Caco-2 (cell line): ENCODE measurements at regions of chr13 and their contacts with region 1.

Region 1: DNA sequence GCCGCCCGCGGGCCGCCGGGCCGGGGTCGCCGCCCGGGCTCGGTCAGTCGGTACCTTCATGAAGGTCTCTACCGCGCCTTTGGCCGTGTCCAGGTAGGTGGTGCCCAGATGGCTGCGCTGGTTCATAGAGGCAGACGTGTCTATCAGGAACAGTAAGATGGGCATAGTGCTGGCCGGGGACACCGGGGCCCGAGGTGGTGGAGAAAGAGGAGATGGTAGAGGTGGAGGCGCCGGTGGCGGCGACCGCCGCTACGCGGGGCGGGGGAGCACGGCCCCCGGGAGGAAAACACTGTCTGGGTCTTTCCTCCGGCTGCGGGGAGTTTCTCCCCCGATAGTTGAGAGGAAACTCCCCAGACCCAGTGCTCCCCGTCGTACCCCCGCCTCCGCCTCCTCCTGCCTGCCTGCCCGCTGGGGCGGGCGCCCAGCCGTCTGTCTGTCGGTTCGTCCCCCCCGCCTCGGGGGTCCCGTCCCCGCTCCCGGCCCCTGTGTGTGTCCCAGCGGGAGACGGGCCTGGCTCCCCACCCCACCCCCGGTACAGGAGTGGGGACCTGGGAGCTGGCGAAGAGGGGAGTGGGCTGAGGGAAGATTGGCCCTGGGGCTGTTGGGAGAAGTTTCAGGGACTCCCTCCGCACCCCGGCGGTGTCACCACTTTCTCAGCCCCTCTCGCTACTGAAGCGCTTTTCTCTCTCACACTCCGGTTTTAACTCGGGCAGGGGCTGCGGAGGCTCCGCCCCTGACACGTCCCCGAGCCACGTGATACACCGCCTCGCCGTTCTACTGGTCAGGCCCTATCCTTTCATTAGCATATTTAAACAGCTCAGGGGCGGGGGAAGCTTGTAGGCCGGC is at the start of gene INTS6:
- DNase-seq: peak; percentile 100
- H3K4me3 ChIP-seq: peak within 1 kb of the TSS; percentile 72
- H3K4me3 Mint-ChIP-seq: peak within 1 kb of the TSS; percentile 72
- H3K27ac Mint-ChIP-seq: peak within 1 kb of the TSS; percentile 82
- H3K4me1 ChIP-seq: peaks cover 12% of the 10 kb centered on the region; the same call in 1 of the 2 replicates
- H3K4me1 Mint-ChIP-seq: no peaks in the 10 kb centered on the region
- H3K27me3 ChIP-seq: no peaks in the 10 kb centered on the region
- H3K27me3 Mint-ChIP-seq: no peaks in the 10 kb centered on the region
- CTCF ChIP-seq: no peak
- total RNA-seq, gene INTS6: 42.6 and 46.7 TPM in 2 replicates

Region 2: GRCh38 chr13:51435002-51435578 is 17.5 kb before region 1 on chr13:
- CTCF ChIA-PET with region 1: interaction called, 4 read pairs
- POLR2A ChIA-PET with region 1: interaction called, 11 read pairs
- intact Hi-C with region 1: no loop called
- DNase-seq: no peak
- H3K4me3 ChIP-seq: no peak overlapping the region
- H3K4me3 Mint-ChIP-seq: no peak overlapping the region
- H3K27ac Mint-ChIP-seq: no peak overlapping the region
- H3K4me1 ChIP-seq: peaks cover 3% of the 10 kb centered on the region; the same call in 1 of the 2 replicates
- H3K4me1 Mint-ChIP-seq: no peaks in the 10 kb centered on the region
- H3K27me3 ChIP-seq: no peaks in the 10 kb centered on the region
- H3K27me3 Mint-ChIP-seq: no peaks in the 10 kb centered on the region
- CTCF ChIP-seq: peak; percentile 55

Region 3: GRCh38 chr13:51614350-51614786 is 161.8 kb after region 1 on chr13:
- CTCF ChIA-PET with region 1: no interaction called
- POLR2A ChIA-PET with region 1: interaction called, 11 read pairs
- intact Hi-C with region 1: no loop called
- DNase-seq: no peak
- H3K4me3 ChIP-seq: no peak overlapping the region
- H3K4me3 Mint-ChIP-seq: no peak overlapping the region
- H3K27ac Mint-ChIP-seq: no peak overlapping the region
- H3K4me1 ChIP-seq: no peaks in the 10 kb centered on the region
- H3K4me1 Mint-ChIP-seq: no peaks in the 10 kb centered on the region
- H3K27me3 ChIP-seq: no peaks in the 10 kb centered on the region
- H3K27me3 Mint-ChIP-seq: no peaks in the 10 kb centered on the region
- CTCF ChIP-seq: no peak

Region 4: DNA sequence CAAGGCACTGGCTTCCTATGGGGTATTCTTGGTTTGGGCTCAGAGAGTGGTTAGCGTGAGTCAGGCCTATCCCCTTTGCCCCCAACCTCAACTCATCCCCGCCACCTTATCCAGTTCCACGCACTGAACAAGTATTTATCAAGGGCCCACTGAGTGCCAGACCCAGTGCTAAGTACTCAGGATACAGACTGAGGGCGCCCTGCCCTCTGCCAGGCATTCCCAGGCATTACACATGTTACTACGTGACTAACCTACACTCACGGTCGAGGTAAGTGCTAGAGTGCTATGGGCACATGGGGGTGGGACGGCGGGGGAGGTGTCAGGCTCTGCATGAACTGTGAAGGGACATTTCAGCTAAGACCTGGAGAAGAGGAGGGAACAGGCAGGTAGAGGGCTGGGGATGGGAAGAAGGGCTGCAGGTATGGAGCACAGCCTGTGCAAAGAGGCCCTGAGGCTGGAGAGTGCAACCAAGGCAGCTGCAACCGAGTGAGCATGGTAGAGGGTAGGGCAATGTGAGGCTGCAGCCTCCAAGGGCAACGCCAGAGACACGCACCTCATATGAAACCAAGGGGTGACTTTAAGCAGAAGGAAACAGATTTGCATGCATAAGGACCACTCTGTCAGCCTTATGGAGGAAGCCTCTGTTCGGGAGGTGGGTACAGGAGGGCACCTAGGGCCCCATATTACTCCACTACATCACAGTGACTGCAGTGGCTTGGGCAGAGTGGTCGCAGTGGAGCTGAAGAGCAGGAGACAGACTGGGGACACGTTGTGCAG is 328.9 kb after region 1 on chr13:
- CTCF ChIA-PET with region 1: no interaction called
- POLR2A ChIA-PET with region 1: no interaction called
- intact Hi-C with region 1: loop called (anchors 5 kb)
- DNase-seq: no peak
- H3K4me3 ChIP-seq: no peak overlapping the region
- H3K4me3 Mint-ChIP-seq: no peak overlapping the region
- H3K27ac Mint-ChIP-seq: no peak overlapping the region
- H3K4me1 ChIP-seq: peaks cover 10% of the 10 kb centered on the region; the same call in 1 of the 2 replicates
- H3K4me1 Mint-ChIP-seq: peaks cover 11% of the 10 kb centered on the region
- H3K27me3 ChIP-seq: no peaks in the 10 kb centered on the region
- H3K27me3 Mint-ChIP-seq: no peaks in the 10 kb centered on the region
- CTCF ChIP-seq: peak; percentile 18 to 23

Region 5: GRCh38 chr13:51803422-51804294 is 351.1 kb after region 1 on chr13 and contains the start of gene DHRS12:
- CTCF ChIA-PET with region 1: no interaction called
- POLR2A ChIA-PET with region 1: interaction called, 13 read pairs
- intact Hi-C with region 1: loop called (anchors 2 kb)
- DNase-seq: peak; percentile 92 to 94
- H3K4me3 ChIP-seq: peak within 1 kb of the TSS; percentile 69
- H3K4me3 Mint-ChIP-seq: peak within 1 kb of the TSS; percentile 89
- H3K27ac Mint-ChIP-seq: peak within 1 kb of the TSS; percentile 94
- H3K4me1 ChIP-seq: peaks cover 8% of the 10 kb centered on the region; the same call in 1 of the 2 replicates
- H3K4me1 Mint-ChIP-seq: peaks cover 9% of the 10 kb centered on the region
- H3K27me3 ChIP-seq: no peaks in the 10 kb centered on the region
- H3K27me3 Mint-ChIP-seq: no peaks in the 10 kb centered on the region
- CTCF ChIP-seq: no peak
- total RNA-seq, gene DHRS12: 12.5 and 14.1 TPM in 2 replicates